ENCODE measurements at regions of chr16 and their contacts with region 1.

Region 1: GRCh38 chr16:53014287-53014686 is 38.4 kb downstream of the CHD9NB start:
- DNase-seq: no peak
- H3K4me3 ChIP-seq: no peak overlapping the region
- H3K27ac ChIP-seq: no peak overlapping the region
- H3K4me1 ChIP-seq: no peaks in the 10 kb centered on the region
- H3K27me3 ChIP-seq: no peaks in the 10 kb centered on the region
- CTCF ChIP-seq: no peak

Region 2: DNA sequence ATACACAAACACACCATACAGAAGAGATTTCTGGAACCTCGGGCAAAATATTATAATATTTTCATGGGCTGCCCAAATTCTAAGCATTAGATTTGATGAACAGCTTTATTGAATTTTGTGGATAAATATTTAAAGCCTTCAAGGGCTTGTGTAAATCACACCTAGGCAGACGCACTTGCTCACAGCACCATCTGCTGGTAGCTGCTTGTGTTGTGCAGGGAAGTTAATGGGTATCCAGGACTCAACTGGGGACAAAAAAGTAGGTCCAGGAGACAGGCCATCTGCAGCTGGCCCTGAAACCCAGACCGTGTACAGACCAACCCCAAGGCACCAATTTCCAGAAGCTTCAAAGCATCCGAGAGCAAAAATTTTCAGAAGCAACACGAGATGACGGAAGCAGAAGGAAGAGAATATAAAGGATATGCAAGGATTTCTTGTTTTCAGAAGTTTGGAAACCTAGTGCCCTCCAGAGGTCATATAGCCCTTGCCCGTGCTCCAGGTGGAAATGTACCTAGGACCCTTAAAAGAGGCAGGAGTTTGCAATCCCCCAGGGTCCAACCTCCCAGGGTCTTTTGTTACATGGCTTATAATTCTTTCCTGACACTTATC is 101.6 kb before region 1 on chr16:
- intact Hi-C with region 1: loop called (anchors 10 kb)
- DNase-seq: peak; percentile 81
- H3K4me3 ChIP-seq: no peak overlapping the region
- H3K27ac ChIP-seq: no peak overlapping the region
- H3K4me1 ChIP-seq: no peaks in the 10 kb centered on the region
- H3K27me3 ChIP-seq: no peaks in the 10 kb centered on the region
- CTCF ChIP-seq: peak; percentile 78